Naive thymus-derived CD8-positive, alpha-beta T cell (primary cell): ENCODE measurements at regions of chr17 and their contacts with region 1.

Region 1: GRCh38 chr17:28896884-28897768 is at the start of gene FLOT2:
- DNase-seq: peak; percentile 56 to 84 (median 67)
- ATAC-seq: peak; percentile 76 to 83
- H3K4me3 Mint-ChIP-seq: peak within 1 kb of the TSS; percentile 91 to 99 (median 98)
- H3K27ac Mint-ChIP-seq: peak within 1 kb of the TSS; percentile 95 to 99 (median 97)
- H3K4me1 Mint-ChIP-seq: peaks cover 47 to 75% (median 72%) of the 10 kb centered on the region in 4 donors
- H3K27me3 Mint-ChIP-seq: no peaks in the 10 kb centered on the region
- polyA plus RNA-seq, gene FLOT2: 230 to 253 (median 237) TPM

Region 2: GRCh38 chr17:28720247-28720996 is 176.7 kb before region 1 on chr17:
- POLR2A ChIA-PET with region 1: interaction called, 20 read pairs
- DNase-seq: peak in 1 of 10 donors; percentile 39
- ATAC-seq: peak in 1 of 2 donors; percentile 0
- H3K4me3 Mint-ChIP-seq: peak overlapping the region; percentile 93 to 99 (median 98)
- H3K27ac Mint-ChIP-seq: peak overlapping the region; percentile 96 to 100 (median 98)
- H3K4me1 Mint-ChIP-seq: peaks cover 20 to 75% (median 56%) of the 10 kb centered on the region in 4 donors
- H3K27me3 Mint-ChIP-seq: peaks cover 0 to 20% (median 7%) of the 10 kb centered on the region in 5 donors

Region 3: DNA sequence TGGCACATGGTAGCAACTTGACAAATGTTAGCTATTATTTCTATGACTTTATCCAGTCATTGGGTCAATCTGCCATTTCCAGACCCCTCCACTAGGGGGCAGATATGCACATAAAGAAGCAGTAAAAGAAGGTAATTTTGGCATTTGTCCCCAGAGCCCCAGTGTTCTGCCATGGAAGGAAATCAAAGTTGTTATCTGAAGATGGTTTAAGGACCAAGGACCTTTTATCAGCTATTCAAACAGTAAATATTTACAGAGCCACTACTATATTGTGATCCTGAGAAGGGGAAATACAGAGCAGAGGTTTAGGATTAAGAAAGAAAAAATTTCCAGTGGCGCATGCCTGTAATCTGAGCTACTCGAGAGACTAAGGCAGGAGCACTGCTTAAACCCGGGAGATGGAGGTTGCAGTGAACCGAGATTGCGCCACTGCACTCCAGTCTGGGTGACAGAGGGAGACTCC is 133.3 kb before region 1 on chr17:
- POLR2A ChIA-PET with region 1: interaction called, 18 read pairs
- DNase-seq: peak; percentile 50 to 91 (median 74)
- ATAC-seq: peak; percentile 71 to 80
- H3K4me3 Mint-ChIP-seq: no peak overlapping the region
- H3K27ac Mint-ChIP-seq: peak overlapping the region in 5 of 10 donors; percentile 3 to 90 (median 61)
- H3K4me1 Mint-ChIP-seq: peaks cover 2 to 6% (median 4%) of the 10 kb centered on the region in 4 donors
- H3K27me3 Mint-ChIP-seq: no peaks in the 10 kb centered on the region

Region 4: GRCh38 chr17:28842282-28843012 is 54.7 kb before region 1 on chr17 and contains the start of gene FAM222B:
- POLR2A ChIA-PET with region 1: interaction called, 18 read pairs
- DNase-seq: peak; percentile 77 to 90 (median 84)
- ATAC-seq: peak; percentile 97 to 98
- H3K4me3 Mint-ChIP-seq: peak within 1 kb of the TSS; percentile 94 to 100 (median 98)
- H3K27ac Mint-ChIP-seq: peak within 1 kb of the TSS; percentile 87 to 98 (median 96)
- H3K4me1 Mint-ChIP-seq: peaks cover 10 to 29% (median 24%) of the 10 kb centered on the region in 4 donors
- H3K27me3 Mint-ChIP-seq: peaks cover 0 to 2% (median 0%) of the 10 kb centered on the region in 5 donors
- polyA plus RNA-seq, gene FAM222B: 7.5 to 20.0 (median 9.2) TPM

Region 5: DNA sequence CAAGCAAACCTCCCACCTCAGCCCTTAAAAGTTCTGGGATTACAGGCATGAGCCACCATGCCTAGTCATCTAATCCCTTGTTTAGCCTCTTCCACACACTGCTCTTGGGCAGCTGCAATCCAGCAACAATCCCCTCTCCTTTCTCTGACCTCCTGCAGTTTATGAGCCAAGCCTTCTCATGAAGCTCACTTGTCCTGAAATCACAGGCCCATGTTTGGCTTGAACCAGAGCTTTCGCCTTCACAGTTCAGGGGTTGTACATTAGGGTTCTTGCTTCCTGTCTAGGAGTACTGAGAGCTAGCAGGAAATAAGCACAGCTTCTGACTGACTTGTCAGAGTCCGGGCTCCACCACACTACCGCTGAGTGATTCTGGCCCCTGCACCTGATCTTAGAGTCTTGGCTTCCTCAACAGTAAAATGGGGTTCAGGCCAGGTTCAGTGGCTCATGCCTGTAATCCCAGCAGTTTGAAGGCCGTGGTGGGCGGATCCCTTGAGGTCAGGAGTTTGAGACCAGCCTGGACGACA is 26.0 kb before region 1 on chr17:
- POLR2A ChIA-PET with region 1: interaction called, 36 read pairs
- DNase-seq: peak in 7 of 10 donors; percentile 3 to 58 (median 33)
- ATAC-seq: peak; percentile 100
- H3K4me3 Mint-ChIP-seq: peak overlapping the region in 9 of 10 donors; percentile 48 to 80 (median 61)
- H3K27ac Mint-ChIP-seq: peak overlapping the region; percentile 86 to 100 (median 96)
- H3K4me1 Mint-ChIP-seq: peaks cover 7 to 18% (median 13%) of the 10 kb centered on the region in 4 donors
- H3K27me3 Mint-ChIP-seq: no peaks in the 10 kb centered on the region

Region 6: DNA sequence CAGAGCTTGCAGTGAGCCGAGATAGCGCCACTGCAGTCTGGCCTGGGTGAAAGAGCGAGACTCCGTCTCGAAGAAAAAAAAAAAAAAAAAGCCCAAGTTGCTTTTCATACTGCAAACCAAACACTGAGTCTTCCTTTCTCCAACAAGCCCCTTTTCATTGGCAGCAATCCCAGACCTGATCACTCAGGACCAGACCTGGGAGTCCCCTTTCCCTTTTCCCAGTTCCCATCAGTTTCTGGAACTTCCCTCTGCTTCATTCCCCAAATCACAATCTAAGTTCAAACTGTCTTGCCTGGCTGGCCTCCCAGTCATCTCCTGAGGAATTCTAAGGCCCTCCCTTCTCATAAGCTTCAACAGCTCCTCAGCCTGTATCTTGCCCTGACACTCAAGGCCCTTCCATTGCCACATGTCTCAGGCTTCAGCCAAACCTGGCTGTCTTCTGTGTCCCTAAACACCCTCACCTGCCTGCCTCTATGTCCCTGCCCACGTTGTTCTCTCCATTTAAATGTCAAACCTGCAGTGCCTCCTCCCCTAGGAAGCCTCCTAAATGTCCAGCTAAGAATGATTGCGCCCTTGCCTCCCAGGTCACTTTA is 66.0 kb after region 1 on chr17:
- POLR2A ChIA-PET with region 1: no interaction called
- DNase-seq: peak in 1 of 10 donors; percentile 24
- ATAC-seq: no peak
- H3K4me3 Mint-ChIP-seq: no peak overlapping the region
- H3K27ac Mint-ChIP-seq: no peak overlapping the region
- H3K4me1 Mint-ChIP-seq: peaks cover 0 to 7% (median under 1%) of the 10 kb centered on the region in 4 donors
- H3K27me3 Mint-ChIP-seq: peaks cover 5 to 23% (median 10%) of the 10 kb centered on the region in 5 donors